Thyroid gland (tissue), 4 donors: ENCODE measurements at regions of chr1 and their contacts with region 1.

Region 1: GRCh38 chr1:45011837-45012638 is at the start of gene UROD:
- DNase-seq: peak; percentile 93 to 95
- H3K4me3 ChIP-seq: peak within 1 kb of the TSS; percentile 73 to 81 (median 76)
- H3K27ac ChIP-seq: peak within 1 kb of the TSS; percentile 61 to 77 (median 70)
- H3K4me1 ChIP-seq: peaks cover 30 to 41% of the 10 kb centered on the region in 2 donors
- H3K27me3 ChIP-seq: no peaks in the 10 kb centered on the region
- CTCF ChIP-seq: peak in 1 of 6 experiments; percentile 43
- POLR2A ChIP-seq: peak; percentile 4 to 60
- total RNA-seq, gene UROD: 94.5 to 137 (median 99.3) TPM

Region 2: DNA sequence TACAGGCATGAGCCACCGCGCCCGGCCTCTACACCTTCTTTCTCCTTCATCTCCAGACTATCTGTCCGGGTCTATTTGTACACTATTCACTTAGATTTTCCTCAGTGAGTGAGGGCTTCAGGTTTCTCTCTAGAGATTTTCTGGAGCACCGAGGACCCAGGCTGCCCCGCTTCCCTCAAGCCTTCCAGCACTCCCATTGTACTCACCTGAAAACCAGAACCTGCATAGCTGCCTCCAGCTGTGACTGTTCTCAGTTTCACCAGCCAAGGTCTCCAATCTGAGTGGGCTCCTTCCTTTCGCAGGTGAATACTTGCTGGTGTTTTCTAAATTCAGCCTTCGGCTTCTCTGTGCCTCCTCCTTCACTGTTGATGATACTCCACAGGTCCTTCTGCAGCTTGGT is 811.7 kb before region 1 on chr1:
- intact Hi-C with region 1: no loop called
- DNase-seq: no peak
- H3K4me3 ChIP-seq: no peak overlapping the region
- H3K27ac ChIP-seq: no peak overlapping the region
- H3K4me1 ChIP-seq: no peaks in the 10 kb centered on the region
- H3K27me3 ChIP-seq: no peaks in the 10 kb centered on the region
- CTCF ChIP-seq: no peak
- POLR2A ChIP-seq: no peak

Region 3: GRCh38 chr1:44842862-44843655 is 169.0 kb before region 1 on chr1 and contains the start of gene PTCH2:
- intact Hi-C with region 1: loop called (anchors 5 kb)
- DNase-seq: peak; percentile 75 to 84
- H3K4me3 ChIP-seq: peak within 1 kb of the TSS; percentile 38 to 48 (median 44)
- H3K27ac ChIP-seq: peak within 1 kb of the TSS; percentile 1 to 17 (median 8)
- H3K4me1 ChIP-seq: peaks cover 0 to 13% of the 10 kb centered on the region in 2 donors
- H3K27me3 ChIP-seq: no peaks in the 10 kb centered on the region
- CTCF ChIP-seq: no peak
- POLR2A ChIP-seq: peak in 1 of 2 donors; percentile 51
- total RNA-seq, gene PTCH2: 0.15 to 1.0 (median 0.52) TPM

Region 4: GRCh38 chr1:45205910-45206721 is 194.1 kb after region 1 on chr1 and contains the start of gene ZSWIM5:
- intact Hi-C with region 1: loop called (anchors 10 kb)
- DNase-seq: peak; percentile 81
- H3K4me3 ChIP-seq: peak within 1 kb of the TSS; percentile 58 to 90 (median 80)
- H3K27ac ChIP-seq: peak within 1 kb of the TSS; percentile 89 to 93 (median 92)
- H3K4me1 ChIP-seq: peaks cover 0 to 6% of the 10 kb centered on the region in 2 donors
- H3K27me3 ChIP-seq: no peaks in the 10 kb centered on the region
- CTCF ChIP-seq: peak in 1 of 6 experiments; percentile 9
- POLR2A ChIP-seq: peak in 1 of 2 donors; percentile 85
- total RNA-seq, gene ZSWIM5: 6.3 to 15.4 (median 12.5) TPM

Region 5: DNA sequence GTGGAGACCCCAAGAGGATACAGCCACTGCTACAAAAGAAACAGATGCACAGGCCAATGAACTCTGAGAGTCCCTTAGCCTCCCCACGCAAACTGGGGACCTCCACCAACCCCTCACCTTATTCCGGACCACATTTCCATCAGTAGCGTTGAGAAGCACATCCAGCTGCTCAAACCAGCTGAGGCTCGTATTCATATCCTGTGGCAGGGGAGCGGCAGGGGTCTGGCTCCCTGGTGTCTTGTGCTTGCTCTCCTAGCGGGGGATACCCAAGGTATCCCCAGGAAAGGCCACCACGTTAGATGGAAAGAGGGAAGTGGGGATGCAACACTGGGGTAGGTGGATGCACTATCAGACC is 487.4 kb after region 1 on chr1:
- intact Hi-C with region 1: loop called (anchors 5 kb)
- DNase-seq: no peak
- H3K4me3 ChIP-seq: peak overlapping the region; percentile 12 to 49 (median 43)
- H3K27ac ChIP-seq: peak overlapping the region in 1 of 3 donors; percentile 56
- H3K4me1 ChIP-seq: peaks cover 15 to 24% of the 10 kb centered on the region in 2 donors
- H3K27me3 ChIP-seq: no peaks in the 10 kb centered on the region
- CTCF ChIP-seq: no peak
- POLR2A ChIP-seq: no peak

Region 6: DNA sequence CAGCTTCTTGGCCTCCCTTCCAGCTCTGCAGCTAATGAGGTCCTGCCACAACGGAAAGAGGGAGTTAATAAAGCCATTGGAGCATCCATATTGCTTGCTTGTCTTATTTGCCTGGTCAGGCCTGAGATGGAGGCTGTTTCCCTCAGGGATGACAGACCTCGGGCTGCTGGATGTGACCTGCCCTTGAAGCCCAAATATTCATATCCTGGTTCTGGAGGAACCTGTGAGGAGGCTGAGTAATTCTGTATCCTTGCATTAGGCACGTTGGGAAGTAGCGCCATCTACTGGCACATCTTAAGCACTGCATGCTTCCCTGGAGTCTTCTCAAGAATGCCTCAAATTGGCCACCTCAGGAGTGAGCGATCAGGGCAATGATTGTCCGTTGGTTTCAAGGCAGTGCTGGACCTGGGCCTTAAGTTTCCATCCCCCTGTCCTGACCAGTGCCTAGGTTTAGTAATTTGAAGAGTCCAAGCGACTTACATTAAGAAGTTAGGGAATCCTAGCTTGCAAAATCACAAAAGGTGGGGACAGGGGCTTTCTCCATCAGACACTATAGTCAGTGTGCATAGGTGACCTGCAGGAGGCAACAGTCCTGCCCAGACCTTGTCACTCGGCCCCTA is 558.0 kb after region 1 on chr1:
- intact Hi-C with region 1: loop called (anchors 10 kb)
- DNase-seq: peak; percentile 76 to 79
- H3K4me3 ChIP-seq: no peak overlapping the region
- H3K27ac ChIP-seq: no peak overlapping the region
- H3K4me1 ChIP-seq: no peaks in the 10 kb centered on the region
- H3K27me3 ChIP-seq: no peaks in the 10 kb centered on the region
- CTCF ChIP-seq: peak; percentile 95 to 98 (median 96)
- POLR2A ChIP-seq: no peak